Psoas muscle (tissue), 8 donors: ENCODE measurements at regions of chr11 and their contacts with region 1.

Region 1: DNA sequence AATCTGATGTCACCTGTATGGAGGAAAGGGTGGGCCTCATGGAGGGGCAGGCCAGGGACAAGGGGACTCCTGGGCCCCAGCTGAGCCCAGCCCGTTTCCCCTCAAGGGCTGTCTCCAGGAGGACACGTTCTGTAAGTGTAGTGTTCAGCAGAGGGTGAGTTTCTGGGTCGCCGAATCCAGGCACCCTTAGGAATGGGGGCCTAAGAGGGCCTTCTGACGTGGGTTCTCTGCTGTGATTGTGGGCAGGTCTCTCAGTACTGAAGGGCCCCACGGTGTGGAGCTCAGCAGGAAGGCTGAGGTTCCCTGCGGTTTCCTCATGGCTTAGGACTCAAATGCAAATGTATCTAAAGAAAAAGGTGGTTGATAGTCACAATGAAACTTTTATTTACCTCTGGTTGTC is 6.5 kb downstream of the PTDSS2 start:
- DNase-seq: peak; percentile 0 to 27
- ATAC-seq: no peak
- H3K4me3 ChIP-seq: no peak overlapping the region
- H3K27ac ChIP-seq: no peak overlapping the region
- H3K4me1 ChIP-seq: peaks cover 7% of the 10 kb centered on the region
- H3K27me3 ChIP-seq: no peaks in the 10 kb centered on the region
- CTCF ChIP-seq: no peak

Region 2: DNA sequence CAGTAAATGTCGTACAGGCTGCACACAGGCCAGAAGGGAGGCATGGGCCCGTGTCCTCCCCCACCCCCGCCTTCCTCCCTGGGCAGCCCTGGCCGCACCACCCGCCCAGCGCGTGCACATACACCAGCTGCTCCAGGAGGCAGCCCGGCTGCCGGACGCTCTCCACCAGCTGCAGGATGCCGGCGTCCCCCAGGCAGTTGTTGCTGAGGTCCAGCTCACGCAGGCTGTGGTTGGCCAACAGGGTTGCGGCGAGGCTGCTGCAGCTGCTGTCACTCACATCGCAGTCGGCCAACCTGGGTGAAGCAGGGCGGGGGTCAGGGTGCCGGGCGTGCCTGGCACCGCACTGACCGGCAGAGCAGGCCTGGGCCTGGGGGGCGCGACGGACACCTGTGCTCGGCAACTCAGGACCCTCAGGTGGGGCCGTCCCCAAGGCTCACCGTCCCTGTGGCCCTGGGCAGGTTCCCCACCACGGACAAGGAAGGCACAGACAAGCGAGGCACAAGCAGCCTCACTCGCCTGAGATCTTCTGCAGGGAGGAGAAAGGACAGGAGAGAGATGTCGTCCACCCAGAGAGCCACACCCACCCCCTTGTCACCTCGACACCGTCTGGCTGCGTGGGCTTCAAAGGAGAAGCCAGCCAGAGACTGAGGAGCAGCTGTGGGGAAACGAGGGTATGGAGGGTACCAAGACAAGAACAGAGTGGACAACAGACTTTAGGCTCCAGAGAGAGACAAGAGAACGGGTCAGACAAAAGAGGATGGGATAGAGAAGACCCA is 38.4 kb after region 1 on chr11:
- intact Hi-C with region 1: loop called in 1 of 2 experiments (anchors 5 kb)
- DNase-seq: peak; percentile 54 to 57
- ATAC-seq: peak; percentile 38 to 75 (median 62)
- H3K4me3 ChIP-seq: no peak overlapping the region
- H3K27ac ChIP-seq: peak overlapping the region; percentile 46
- H3K4me1 ChIP-seq: no peaks in the 10 kb centered on the region
- H3K27me3 ChIP-seq: no peaks in the 10 kb centered on the region
- CTCF ChIP-seq: no peak

Region 3: GRCh38 chr11:789943-790342 is 333.4 kb after region 1 on chr11 and contains the start of gene CEND1:
- intact Hi-C with region 1: no loop called
- DNase-seq: peak; percentile 45 to 62
- ATAC-seq: peak in 1 of 4 donors; percentile 17
- H3K4me3 ChIP-seq: no peak within 1 kb of the TSS
- H3K27ac ChIP-seq: no peak within 1 kb of the TSS
- H3K4me1 ChIP-seq: no peaks in the 10 kb centered on the region
- H3K27me3 ChIP-seq: peaks cover 0 to 43% (median 15%) of the 10 kb centered on the region in 3 donors
- CTCF ChIP-seq: no peak
- total RNA-seq, gene CEND1: 0.22 TPM in 1 of 4 donors, not detected in the others